ENCODE measurements at regions of chr9 and their contacts with region 1.

Region 1: DNA sequence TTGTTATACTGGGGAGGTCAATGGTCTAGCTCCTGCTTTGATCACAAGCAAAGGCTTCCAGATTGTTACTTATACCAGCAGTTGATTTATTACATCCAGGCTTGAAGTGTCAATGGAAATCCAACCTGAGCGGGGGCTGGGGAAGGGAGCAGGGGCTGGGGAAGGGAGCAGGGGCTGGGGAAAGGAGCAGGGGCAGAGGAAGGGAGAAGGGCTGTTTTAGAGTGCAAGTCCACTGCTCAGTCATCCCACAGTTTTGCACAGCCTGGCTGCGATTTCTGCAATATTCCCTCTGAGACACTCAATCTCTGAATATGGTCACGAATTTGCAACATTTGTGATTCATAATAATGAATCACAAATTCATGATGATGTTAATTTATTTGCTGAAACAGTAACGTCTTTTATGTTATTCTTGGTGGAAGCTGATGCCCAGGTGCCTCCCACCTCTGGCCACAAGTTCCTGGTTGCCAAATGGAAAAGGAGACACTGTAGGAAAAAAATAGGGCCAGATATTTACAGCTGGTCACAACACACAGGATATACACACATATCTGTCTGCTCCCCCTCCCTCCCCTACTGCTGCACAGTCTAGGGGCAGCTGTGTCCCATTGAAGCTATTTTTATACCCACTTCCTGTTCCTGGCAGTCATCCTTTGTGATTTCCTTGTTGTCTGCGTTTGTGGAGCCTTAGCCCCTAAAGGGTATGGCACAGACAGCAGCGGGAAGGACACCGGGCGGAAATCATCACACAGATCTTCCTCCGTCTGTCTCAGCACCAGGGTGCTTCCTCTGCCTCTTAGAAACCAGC is 325.1 kb downstream of the GADD45G start:
- DNase-seq: no peak
- H3K4me3 ChIP-seq: no peak overlapping the region
- CTCF ChIP-seq: no peak

Region 2: GRCh38 chr9:89318123-89319014 is 611.5 kb before region 1 on chr9 and contains the start of gene SECISBP2:
- in situ Hi-C with region 1: loop called (anchors 10 kb)
- DNase-seq: peak; percentile 95
- H3K4me3 ChIP-seq: peak within 1 kb of the TSS; percentile 68
- CTCF ChIP-seq: peak; percentile 76

Region 3: DNA sequence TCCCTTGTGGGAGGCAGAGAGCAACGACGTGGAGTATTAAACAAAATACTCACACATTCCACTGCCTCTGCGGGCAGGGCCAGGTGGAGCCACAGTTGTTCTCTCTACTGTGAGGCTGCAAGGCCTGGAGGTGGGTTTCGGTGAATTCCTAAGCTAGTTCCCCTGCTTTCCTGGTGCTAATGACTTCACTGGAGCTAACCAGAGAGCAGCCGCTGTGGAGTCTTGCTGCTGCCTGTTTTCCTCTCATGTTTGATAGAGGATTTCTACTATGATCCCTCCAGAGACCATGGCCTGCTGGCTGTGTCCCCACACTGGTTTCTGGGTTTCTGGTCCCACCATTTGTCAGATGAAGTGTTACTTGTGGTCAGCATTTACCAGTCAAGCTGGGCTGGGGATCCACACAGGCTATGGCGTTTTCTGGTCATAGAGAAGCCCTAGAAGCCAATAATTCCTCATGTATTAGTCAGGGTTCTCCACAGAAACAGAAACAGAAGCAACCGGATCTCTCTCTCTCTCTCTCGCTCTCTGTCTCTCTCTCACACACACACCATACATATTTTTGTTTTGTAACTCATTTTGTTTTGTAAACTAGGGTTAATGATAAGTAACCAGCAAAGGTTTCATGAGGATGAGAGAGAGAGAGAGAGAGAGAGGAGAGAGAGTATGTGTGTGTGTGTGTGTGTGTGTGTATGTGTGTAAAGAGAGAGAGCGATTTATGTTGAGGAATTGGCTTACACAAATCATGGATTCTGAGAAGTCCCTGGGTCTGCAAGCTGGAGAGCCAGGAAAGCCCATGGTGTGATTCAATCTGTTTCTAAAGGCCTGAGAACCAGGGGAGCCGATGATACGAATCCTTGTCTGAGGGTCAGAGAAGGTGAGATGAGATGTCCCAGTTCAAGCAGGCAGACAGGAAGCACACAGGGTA is 77.9 kb after region 1 on chr9:
- in situ Hi-C with region 1: no loop called
- DNase-seq: peak; percentile 81
- H3K4me3 ChIP-seq: no peak overlapping the region
- CTCF ChIP-seq: no peak

Measured in astrocyte of the cerebellum (primary cell).